Sigmoid colon (tissue), 7 donors: ENCODE measurements at regions of chr3 and their contacts with region 1.

Region 1: DNA sequence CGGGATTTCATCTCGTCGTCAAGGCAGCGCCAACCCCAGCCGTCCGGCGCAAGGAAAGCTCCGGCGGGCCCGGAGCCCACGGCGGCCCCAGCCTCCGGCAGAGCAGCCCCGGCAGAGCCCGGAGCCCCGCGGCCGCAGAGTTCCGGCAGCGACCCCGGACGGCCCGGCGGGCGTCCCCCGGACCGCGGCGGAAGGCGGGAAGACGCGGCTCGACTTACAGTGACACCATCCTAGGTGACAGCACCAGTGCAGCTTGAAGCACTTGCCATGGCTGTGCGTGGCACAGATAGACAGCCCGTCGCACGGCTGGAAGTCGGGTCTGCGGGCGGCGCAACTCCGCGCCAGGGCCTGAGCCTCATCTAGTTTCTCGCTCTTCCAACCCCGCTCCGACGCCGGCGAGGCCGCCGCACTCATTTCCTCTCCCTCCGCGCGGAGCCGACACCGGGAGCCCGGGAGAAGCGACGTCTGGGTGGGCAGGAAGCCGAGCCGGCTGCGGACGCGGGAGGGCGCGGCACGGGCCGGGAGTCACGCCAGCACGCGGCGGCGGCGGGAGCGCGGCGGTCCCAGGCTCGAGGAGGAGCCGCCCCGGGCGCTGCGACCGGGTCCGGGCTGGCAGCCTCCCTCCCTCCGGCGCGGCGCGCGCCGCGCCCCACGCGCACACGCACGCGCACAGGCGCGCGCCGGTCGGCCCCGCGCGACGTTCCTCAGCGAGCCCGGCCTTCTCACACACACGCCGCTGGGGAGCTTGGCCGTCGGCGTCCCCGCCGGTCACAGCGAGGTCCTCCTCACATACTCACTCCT is at the start of gene C3orf70:
- DNase-seq: peak; percentile 85
- H3K4me3 ChIP-seq: peak within 1 kb of the TSS; percentile 71 to 90 (median 84)
- H3K27ac ChIP-seq: peak within 1 kb of the TSS; percentile 90 to 95 (median 94)
- H3K4me1 ChIP-seq: peaks cover 0 to 38% (median 27%) of the 10 kb centered on the region in 4 donors
- H3K27me3 ChIP-seq: no peaks in the 10 kb centered on the region
- CTCF ChIP-seq: no peak
- EP300 ChIP-seq: no peak
- POLR2A ChIP-seq: peak in 1 of 2 donors; percentile 20
- total RNA-seq, gene C3orf70: 26.0 to 52.3 (median 38.7) TPM

Region 2: DNA sequence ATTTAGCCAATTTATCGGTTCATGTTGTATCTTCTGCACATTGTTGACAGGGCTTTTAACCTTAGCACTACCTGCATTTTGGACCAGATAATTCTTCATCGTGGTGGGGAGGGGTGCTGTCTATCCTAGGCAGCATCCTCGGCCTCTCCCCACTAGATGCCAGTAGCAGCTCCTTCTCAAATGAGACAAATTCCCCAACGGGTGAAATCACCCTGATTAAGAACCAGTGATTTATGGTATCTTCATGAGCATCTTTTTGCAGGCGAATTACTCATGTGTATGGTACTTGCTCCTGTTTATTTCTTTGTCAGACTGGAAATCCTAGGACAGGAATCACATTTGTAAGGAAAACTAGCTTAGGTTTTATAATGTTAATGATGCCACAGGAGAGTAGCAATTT is 67.7 kb before region 1 on chr3:
- intact Hi-C with region 1: loop called (anchors 5 kb)
- DNase-seq: no peak
- H3K4me3 ChIP-seq: no peak overlapping the region
- H3K27ac ChIP-seq: peak overlapping the region in 2 of 4 donors; percentile 32 to 44
- H3K4me1 ChIP-seq: peaks cover 0 to 53% (median 28%) of the 10 kb centered on the region in 4 donors
- H3K27me3 ChIP-seq: no peaks in the 10 kb centered on the region
- CTCF ChIP-seq: peak in 2 of 4 experiments; percentile 17 to 19
- EP300 ChIP-seq: no peak
- POLR2A ChIP-seq: no peak